Calu3 (cell line): ENCODE measurements at regions of chr19 and their contacts with region 1.

Region 1: DNA sequence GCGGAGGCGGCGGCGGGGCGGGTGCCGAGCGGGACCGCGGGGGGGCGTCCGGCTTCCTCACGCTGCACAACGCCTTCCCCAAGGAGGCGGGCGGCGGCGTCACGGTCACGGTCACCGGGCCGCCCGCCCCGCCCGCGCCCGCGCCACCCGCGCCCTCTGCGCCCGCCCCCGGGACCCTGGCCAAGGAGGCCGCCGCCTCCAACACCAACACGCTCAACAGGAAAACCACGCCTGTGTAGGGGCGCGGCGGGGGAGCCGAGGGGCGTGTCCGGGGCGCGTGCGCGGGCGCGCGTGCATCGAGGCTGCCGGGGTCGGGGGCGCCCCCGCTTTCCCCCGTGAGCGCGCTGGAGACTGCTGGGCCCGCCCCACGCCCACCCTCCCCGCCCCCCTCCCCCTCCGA is 8.8 kb upstream of the CACNG6 start:
- DNase-seq: peak; percentile 94
- H3K4me3 Mint-ChIP-seq: no peak overlapping the region
- H3K27ac Mint-ChIP-seq: no peak overlapping the region
- H3K4me1 Mint-ChIP-seq: peaks cover 24% of the 10 kb centered on the region
- H3K27me3 Mint-ChIP-seq: no peaks in the 10 kb centered on the region
- CTCF ChIP-seq: no peak

Region 2: GRCh38 chr19:53808710-53809125 is 173.9 kb before region 1 on chr19:
- CTCF ChIA-PET with region 1: interaction called, 11 read pairs
- intact Hi-C with region 1: no loop called
- DNase-seq: peak; percentile 38
- H3K4me3 Mint-ChIP-seq: no peak overlapping the region
- H3K27ac Mint-ChIP-seq: no peak overlapping the region
- H3K4me1 Mint-ChIP-seq: peaks cover 7% of the 10 kb centered on the region
- H3K27me3 Mint-ChIP-seq: no peaks in the 10 kb centered on the region
- CTCF ChIP-seq: peak; percentile 83

Region 3: DNA sequence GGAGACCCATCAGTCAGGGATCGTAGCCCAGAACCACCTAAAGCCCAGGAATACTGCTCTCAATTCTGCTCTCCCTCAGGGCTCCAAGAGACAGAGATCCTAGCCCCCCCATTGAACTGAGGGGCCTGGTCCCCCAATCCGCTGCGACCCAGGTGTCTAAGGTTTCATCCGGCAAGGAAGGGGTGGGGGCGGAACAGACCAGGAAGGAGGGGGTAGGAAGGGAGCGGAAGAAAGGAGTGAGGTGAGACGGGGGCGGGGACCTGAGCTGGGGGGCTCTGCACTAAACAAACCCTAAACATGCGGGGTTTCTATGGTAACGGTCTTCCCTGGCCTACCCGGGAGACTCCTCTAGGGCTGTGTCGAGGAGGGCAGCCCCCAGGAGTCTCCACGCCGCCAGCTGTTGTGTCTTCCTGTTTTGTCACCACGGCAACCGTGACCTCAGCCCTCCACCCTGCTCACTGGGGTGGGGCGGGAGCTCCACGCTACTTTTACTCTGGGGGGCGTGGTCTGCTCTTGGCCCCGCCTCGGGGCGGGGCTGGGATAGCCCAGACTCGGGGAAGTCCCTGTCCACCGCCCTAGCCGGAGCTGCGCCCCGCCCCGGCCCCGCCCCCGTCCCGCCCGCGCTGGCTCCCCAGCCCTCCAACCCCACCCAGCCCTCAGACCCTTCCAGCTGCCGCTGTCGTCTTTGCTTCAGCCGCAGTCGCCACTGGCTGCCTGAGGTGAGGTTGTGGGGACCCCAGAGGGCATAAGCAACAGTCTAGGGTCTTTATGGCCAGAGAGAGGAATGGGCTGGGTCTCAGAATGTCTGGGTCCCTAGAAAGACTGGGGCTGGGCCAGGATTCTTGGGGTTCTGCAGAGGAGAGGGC is 115.2 kb before region 1 on chr19 and contains the start of gene MYADM:
- CTCF ChIA-PET with region 1: interaction called, 4 read pairs
- intact Hi-C with region 1: loop called (anchors 2 kb)
- DNase-seq: peak; percentile 100
- H3K4me3 Mint-ChIP-seq: peak within 1 kb of the TSS; percentile 95
- H3K27ac Mint-ChIP-seq: peak within 1 kb of the TSS; percentile 99
- H3K4me1 Mint-ChIP-seq: peaks cover 56% of the 10 kb centered on the region
- H3K27me3 Mint-ChIP-seq: no peaks in the 10 kb centered on the region
- CTCF ChIP-seq: no peak
- total RNA-seq, gene MYADM: 366 and 464 TPM in 2 replicates

Region 4: DNA sequence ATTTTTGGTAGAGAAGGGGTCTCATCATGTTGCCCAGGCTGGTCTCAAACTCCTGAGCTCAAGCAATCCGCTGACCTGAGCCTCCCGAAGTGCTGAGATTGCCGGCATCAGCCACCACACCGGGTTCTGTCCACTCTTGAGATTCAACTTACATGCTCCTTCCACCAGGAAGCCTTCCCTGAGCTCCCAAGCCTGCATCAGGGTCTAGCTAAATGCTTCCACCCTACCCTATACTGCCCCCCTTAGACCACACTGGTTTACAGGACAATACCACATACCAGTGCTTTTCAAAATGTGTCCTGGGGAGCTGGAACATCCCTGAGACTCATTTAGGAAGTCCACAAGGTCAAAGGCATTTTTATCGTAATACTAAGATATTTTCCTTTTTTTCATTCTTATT is 35.0 kb before region 1 on chr19:
- CTCF ChIA-PET with region 1: interaction called, 10 read pairs
- intact Hi-C with region 1: no loop called
- DNase-seq: peak; percentile 41
- H3K4me3 Mint-ChIP-seq: no peak overlapping the region
- H3K27ac Mint-ChIP-seq: no peak overlapping the region
- H3K4me1 Mint-ChIP-seq: peaks cover 11% of the 10 kb centered on the region
- H3K27me3 Mint-ChIP-seq: peaks cover 27% of the 10 kb centered on the region
- CTCF ChIP-seq: no peak

Region 5: GRCh38 chr19:54023191-54023590 is 40.6 kb after region 1 on chr19:
- CTCF ChIA-PET with region 1: interaction called, 38 read pairs
- intact Hi-C with region 1: loop called (anchors 2 kb)
- DNase-seq: no peak
- H3K4me3 Mint-ChIP-seq: peak overlapping the region; percentile 13
- H3K27ac Mint-ChIP-seq: peak overlapping the region; percentile 98
- H3K4me1 Mint-ChIP-seq: peaks cover 50% of the 10 kb centered on the region
- H3K27me3 Mint-ChIP-seq: no peaks in the 10 kb centered on the region
- CTCF ChIP-seq: no peak

Region 6: DNA sequence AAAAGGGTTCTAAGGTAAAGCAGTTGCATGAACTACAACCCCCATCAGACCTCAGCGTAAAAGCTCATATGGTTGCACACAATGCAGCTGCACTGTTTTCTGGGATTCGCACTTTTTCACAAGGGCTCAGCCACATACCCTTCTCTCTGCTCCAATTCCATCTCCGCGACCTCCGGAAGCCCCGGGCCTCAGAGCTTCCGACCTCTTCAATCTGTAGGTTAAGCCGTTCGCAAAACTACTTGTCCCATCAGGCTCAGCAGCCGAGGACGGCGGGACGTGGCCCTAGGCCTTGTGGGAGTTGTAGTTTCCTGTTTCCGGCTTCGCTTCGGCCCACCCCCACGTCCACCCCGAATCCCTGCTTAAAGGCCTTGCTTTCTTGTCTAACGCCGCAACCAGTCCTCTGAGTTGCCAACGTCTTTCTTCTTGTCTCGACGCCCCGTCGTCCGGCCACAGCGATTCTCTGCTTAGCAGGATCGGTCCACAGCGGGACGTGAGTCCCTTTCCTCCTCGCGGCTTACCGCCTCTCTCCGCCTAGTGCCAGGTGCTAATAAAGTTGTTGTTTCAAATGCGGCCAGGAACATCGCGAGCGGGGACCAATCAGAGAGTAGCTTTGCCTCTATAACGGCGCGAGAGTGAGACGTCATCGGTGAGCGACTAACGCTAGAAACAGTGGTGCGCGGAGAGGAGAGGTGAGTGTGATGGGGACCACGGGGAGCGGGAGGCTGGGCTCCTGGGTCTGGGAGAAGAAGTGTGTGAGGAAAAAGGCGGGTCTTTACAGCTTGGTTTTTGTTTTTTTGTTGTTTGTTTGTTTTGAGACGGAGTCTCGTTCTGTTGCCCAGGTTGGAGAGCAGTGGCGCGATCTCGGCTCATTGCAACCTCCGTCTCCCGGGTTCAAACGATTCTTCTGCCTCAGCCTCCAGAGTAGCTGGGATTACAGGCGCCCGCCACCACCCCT is 132.8 kb after region 1 on chr19 and contains the starts of genes PRPF31 and TFPT:
- CTCF ChIA-PET with region 1: no interaction called
- intact Hi-C with region 1: loop called (anchors 10 kb)
- DNase-seq: peak; percentile 96
- H3K4me3 Mint-ChIP-seq: peak within 1 kb of the TSS; percentile 82
- H3K27ac Mint-ChIP-seq: peak within 1 kb of the TSS; percentile 93
- H3K4me1 Mint-ChIP-seq: peaks cover 27% of the 10 kb centered on the region
- H3K27me3 Mint-ChIP-seq: no peaks in the 10 kb centered on the region
- CTCF ChIP-seq: no peak
- total RNA-seq, gene PRPF31: 106 TPM in 2 replicates
- total RNA-seq, gene TFPT: 30.8 and 34.2 TPM in 2 replicates